GM10248 (cell line): ENCODE measurements at regions of chr6 and their contacts with region 1.

Region 1: GRCh38 chr6:32785781-32786533 is 22.6 kb upstream of the HLA-DQB2 start:
- DNase-seq: peak; percentile 53
- CTCF ChIP-seq: peak; percentile 66

Region 2: GRCh38 chr6:32244946-32245398 is 541.0 kb before region 1 on chr6:
- CTCF ChIA-PET with region 1: interaction called, 21 read pairs
- POLR2A ChIA-PET with region 1: no interaction called
- DNase-seq: peak; percentile 83
- CTCF ChIP-seq: peak; percentile 95

Region 3: DNA sequence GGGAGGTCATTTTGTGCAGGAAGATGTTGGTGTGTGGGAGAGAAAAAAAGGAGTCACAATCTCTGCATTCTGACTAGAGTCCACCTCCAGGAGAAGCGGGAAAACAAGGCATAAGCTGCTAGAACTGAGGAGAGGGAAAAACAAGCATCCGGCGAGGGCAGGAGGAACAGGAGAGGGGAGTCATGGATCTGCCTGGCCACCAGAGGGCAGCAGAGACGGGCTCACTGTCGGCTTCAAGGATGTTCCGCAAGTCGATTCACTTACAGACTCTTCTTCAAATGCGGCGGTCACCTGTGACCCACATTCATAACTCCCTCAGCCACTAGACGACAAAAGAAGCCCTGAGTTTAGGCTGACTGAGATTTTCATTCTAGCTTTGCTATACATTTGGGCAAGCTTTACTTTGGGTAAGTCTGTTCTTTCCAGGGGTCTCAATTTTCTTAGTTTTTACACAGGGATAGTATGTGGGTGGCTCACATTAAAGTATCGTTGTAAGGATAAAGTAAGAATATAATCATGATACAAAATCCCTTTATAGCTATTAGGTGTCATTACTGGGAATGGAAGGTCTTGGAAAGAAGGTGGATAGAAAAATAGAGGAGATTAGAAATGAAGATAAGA is 372.4 kb before region 1 on chr6:
- CTCF ChIA-PET with region 1: interaction called, 234 read pairs
- POLR2A ChIA-PET with region 1: no interaction called
- DNase-seq: peak; percentile 80
- CTCF ChIP-seq: peak; percentile 92

Region 4: DNA sequence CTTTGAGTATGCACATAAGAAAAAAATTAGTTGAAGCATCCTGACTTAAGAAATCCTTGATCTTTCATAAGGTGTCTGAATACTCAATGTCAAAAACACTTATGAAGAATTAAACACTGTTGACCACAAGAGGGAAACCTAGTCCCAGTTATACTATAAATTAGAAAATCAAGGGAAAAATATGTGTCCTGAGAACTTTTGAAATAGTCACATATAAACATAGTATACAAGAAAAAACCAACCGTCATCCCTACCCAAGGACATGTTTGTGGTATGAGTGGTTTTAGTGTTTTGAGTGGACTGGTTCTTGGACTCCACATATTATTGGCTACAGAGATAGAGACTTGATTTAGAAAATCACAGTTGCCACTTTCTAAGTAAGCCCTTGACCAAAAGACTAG is 353.9 kb before region 1 on chr6:
- CTCF ChIA-PET with region 1: interaction called, 17 read pairs
- POLR2A ChIA-PET with region 1: no interaction called
- DNase-seq: peak; percentile 29
- CTCF ChIP-seq: peak; percentile 47

Region 5: GRCh38 chr6:32713241-32713640 is 72.7 kb before region 1 on chr6:
- CTCF ChIA-PET with region 1: interaction called, 13 read pairs
- POLR2A ChIA-PET with region 1: no interaction called
- DNase-seq: no peak
- CTCF ChIP-seq: no peak

Region 6: DNA sequence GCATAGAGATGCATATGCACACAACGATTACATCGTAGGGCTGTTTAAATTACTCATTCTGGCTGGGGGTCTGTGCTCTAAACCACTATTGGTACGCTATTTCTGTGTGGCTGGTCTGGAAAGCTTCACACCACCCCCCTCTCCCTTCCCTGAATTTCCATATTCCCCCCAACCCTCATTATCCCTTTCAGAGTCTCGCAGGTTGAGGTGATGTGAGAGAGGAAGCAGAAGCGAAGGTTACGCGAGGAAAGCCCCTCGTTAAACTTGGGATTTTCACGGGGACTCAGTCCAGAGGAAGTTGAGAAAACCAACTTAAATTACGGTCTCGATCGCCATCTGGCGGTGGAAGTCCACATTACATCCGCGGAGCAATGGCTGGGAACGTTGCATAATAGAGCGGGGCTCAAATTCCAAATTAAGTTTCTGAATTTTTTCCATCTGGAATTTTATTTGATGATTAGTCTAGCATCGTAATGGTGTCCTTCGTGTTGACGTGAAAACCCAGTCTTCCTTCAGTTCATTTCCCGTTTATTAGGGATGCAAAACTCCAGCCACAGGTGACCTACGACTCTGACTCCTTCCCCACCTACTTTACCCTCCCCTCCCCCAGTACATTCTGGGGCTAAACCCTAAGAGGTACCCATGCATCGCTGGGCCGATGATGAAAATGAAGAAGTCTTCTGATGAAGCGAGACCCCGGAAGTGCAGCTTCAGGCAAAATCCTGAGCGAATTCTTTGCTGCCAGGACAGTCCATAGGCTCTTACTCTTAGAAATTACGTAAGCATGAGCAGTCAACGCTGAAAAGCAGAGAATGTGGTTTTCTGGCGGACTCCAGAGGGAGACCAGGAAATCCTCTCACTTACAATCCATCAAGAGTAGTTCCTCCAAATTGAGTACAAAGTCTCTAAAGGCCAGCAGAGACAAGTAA is 11.2 kb after region 1 on chr6:
- CTCF ChIA-PET with region 1: interaction called, 17 read pairs
- POLR2A ChIA-PET with region 1: no interaction called
- DNase-seq: peak; percentile 56
- CTCF ChIP-seq: peak; percentile 73

Region 7: GRCh38 chr6:32843979-32844838 is 58.3 kb after region 1 on chr6 and contains the start of gene PSMB8:
- CTCF ChIA-PET with region 1: no interaction called
- POLR2A ChIA-PET with region 1: no interaction called
- DNase-seq: peak; percentile 92
- CTCF ChIP-seq: no peak